Colonic mucosa (tissue), 4 donors: ENCODE measurements at regions of chr6 and their contacts with region 1.

Region 1: DNA sequence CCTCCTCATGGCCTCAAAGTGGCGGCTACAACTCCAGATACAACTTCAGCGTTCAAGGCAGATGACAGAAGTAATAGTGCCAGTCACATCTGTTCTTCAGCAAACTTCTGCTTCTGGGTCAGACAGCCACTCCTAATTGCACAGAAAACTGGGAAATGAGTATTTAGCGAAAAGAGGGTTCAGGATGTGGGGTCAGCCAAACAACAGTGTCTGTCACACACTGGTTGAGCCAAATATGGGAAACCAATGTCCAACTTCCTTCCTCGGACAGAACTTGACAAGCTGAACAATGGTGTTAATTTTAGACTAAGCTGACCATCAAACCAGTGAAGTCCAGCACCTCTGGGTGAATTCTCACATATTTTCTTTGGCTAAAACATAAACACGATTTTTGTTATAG is 22.1 kb downstream of the NUDT3 start:
- DNase-seq: no peak
- H3K4me3 ChIP-seq: no peak overlapping the region
- H3K27ac ChIP-seq: no peak overlapping the region
- H3K4me1 ChIP-seq: no peaks in the 10 kb centered on the region
- H3K27me3 ChIP-seq: no peaks in the 10 kb centered on the region
- CTCF ChIP-seq: no peak

Region 2: DNA sequence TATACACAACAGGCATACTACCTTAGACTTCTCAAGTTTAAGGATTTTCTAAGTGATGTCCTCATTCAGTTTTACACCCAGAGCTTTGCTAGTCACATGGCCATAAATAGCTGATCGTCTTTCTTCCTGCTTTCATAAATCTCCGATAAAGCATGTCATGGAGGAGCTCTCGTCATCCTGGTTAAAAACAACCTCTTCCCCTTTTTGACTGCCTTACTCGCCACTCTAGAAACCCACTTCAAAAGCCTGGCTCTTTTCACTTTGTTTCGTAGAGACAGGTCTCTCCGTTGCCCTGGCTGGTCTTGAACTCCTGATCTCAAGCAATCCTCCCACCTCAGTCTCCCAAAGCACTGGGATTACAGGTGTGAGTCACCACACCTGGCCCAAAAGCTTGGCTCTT is 54.6 kb before region 1 on chr6:
- intact Hi-C with region 1: loop called (anchors 10 kb)
- DNase-seq: no peak
- H3K4me3 ChIP-seq: no peak overlapping the region
- H3K27ac ChIP-seq: no peak overlapping the region
- H3K4me1 ChIP-seq: no peaks in the 10 kb centered on the region
- H3K27me3 ChIP-seq: no peaks in the 10 kb centered on the region
- CTCF ChIP-seq: no peak